Posterior cingulate gyrus (tissue), 11 donors: ENCODE measurements at regions of chr11 and their contacts with region 1.

Region 1: DNA sequence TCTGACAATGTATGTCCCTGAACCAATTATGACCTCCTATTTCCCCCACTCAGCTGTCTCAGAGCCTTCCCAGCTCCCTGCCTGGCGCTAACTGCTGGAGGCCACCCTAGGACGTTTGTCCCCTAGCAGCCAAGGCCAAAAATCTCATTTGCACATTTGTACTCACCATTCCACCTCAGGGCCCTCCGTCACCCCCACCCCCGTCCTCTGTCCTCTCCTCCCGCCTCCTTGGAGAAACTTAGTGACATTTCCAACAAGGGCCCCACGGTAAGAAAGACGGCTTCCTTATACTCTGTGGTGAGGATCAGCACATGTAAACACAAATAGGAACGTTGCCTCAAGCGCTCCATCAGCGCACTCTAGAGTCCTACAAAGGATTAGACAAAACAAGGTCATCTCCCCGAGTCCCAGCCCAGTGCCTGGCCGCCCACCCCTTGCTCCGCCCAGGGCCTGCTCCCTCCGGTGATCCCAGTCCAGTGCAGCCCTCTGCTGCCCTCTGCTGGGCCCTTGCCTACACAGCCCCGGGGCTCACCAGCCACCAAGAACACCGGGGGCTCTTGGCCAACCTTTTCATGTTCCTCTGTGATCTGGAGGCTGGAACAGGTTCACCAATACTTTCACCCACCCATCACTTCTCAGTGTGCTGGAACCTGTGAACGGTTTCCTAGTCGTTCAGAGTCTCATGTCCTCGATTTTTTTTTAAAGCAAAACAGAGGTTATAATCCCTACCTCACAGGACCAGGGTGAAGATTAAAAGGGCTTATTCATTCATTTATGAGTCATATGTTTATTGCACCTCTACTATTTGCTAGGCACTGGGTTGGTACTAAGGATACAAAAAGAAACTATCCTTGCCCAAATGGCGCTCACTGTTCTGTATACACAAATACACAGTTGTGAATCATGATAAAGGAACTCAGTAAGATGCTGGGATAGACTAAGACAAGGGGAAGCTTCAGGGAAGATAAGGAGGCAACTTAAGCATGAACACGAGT is 15.3 kb upstream of the CTR9 start:
- DNase-seq: peak; percentile 81 to 99 (median 93)

Region 2: GRCh38 chr11:10331548-10332289 is 404.1 kb before region 1 on chr11:
- intact Hi-C with region 1: no loop called
- DNase-seq: no peak

Region 3: DNA sequence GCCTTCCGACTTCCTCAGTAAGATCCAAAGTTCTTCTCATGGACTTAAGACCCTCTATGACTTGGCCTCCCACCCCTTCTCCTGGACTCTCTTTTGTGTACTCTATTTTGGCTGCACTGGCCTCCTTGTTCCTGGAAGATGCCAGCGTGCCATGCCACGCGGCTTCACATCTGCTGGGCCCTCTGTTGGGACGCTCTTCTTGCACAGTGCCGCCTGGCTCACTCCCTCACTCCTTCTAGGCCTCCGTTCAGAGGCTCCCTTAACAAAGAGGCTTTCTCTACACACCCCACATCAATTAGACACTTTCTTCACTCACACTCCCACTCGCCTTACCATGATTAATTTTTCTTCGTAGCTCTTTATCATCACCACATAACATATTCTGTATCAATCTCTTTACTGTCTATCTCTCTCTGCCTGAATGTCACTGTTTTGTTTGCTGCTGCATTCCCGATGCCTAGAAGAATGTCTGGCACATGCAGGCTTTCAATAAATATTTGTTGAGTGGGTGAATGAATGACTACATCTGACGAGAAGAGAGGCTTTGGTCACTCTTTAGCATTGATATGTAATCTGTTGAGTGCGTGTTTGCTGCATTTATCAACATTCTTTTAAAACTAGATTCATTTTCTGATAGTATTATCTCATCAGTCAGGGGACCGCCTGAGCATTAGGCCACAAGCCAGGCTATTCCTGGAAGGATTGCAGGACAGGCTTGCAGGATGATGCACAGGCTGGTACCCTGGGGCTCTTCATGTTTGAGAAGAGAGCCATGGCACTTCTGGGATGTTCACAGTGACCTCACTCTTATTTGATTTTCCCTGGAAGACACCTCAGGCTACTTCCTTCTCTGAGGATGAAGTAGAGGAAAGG is 341.3 kb before region 1 on chr11:
- intact Hi-C with region 1: no loop called
- DNase-seq: no peak

Region 4: DNA sequence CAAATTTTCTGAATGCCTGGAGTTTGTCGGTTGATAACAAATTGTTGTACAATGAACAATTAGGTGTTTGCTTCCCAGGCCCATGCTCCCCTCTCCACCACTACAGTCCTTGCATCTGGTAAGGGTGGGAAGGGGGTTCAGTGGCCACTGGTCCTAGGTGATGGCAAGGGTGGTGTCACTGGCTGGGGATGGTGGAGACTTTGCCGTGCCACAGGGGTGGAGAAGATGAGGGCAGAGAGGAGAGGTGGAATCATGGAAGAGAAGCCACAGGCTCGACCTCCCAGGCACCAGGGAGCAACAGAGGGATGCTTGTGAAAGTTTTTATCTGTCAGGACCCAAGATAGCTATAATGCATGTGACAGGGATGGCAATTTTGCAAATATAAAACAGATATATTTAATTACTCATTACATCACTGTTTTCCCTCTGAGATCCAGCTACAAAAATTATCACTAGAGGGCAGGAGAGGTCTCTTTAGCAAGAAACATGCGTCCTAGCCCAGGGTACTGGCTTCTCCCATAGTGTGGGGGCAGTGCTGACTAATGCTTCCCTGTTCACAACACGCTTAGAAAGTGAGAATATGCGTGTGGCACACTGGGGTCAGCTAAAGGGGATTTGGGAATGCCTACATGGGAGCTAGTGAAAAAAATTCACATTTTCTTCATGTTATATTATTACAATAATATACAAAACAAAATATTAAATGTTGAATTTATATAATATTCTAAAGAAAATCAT is 329.8 kb before region 1 on chr11:
- intact Hi-C with region 1: loop called (anchors 1 kb)
- DNase-seq: peak; percentile 40 to 95 (median 68)

Region 5: DNA sequence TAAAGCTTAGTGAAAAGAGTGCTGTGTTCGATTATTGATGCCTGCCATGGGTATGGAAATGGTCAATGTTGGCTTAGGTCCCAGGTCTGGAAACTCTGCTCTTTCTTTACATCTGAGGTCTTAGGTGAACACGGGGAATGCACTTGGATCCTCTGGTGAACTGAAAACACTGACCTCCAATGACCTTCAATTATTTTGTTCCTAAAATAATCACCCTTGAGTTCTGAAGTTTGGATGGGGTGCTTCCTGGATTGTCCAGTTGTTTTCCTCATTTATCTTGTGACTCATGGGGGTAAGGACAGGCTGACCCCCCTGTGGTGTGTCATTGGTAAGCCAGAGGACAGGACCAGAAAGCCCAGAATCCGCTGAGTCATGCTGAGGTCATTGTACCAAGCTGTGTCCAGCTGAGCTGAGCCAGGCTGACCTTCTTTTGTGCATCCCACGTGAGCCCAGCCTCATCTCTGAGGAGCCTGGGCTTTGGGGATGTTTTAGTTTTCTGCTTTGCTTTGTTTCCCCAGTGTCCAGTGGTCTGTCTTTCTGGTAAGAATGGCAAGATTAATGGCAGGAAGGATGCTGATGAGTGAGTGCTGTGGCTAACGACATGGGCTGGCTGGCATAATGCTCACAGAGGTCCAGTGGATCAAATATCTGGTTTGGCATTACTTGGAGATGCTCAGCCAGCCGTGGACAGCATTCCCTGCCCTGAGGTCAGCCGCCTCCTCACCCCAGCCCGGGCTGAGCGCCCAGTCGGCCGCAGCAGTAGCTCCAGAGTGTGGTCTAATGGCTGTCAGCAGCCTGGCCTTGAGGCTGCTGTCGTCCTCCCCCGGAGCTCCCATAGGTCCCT is 245.2 kb before region 1 on chr11:
- intact Hi-C with region 1: no loop called
- DNase-seq: peak in 8 of 10 donors; percentile 67 to 96 (median 86)

Region 6: GRCh38 chr11:10564696-10565318 is 171.0 kb before region 1 on chr11:
- intact Hi-C with region 1: loop called (anchors 10 kb)
- DNase-seq: no peak

Region 7: DNA sequence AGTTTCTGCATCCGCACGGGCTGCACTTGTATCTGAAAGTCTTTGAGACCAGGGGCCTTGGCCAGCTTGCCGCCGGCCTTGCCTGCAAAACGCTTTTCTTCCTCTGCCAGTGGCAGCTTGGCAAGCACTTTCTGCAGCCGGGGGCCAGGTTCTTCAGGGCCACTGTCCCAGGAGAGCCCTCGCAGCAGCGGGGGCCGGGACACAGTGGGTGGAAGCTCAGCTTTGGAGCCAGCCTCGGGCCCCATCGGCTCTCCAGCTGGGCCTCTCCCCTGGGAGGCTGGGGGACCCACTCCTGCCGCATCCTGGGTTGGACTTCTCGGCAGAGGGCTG is 109.8 kb before region 1 on chr11:
- intact Hi-C with region 1: loop called (anchors 2 kb)
- DNase-seq: peak in 6 of 10 donors; percentile 25 to 88 (median 46)

Region 8: DNA sequence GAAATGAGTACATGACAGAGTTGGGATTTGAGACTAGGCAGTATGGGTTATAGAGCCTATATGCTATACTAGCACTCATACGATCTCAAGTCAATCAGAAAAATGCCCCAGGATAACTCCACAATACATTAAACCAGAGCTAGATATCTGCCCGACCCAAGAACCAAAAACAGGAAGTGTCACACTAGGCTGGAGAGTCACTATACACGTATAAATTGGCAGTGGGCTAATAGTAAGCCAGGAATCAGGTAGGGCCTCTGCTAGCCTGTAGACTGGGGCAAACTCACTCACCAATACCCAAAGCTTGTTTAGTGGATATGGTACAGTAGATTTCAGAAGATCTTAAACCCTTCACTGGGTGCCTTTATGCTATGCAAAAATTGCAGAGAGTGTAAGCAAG is 89.1 kb after region 1 on chr11:
- intact Hi-C with region 1: no loop called
- DNase-seq: no peak